Tibial artery (tissue), 4 donors: ENCODE measurements at regions of chr6 and their contacts with region 1.

Region 1: GRCh38 chr6:107674995-107675738 is 148.9 kb downstream of the SCML4 start:
- DNase-seq: peak; percentile 65 to 82
- H3K4me3 ChIP-seq: no peak overlapping the region
- H3K27ac ChIP-seq: no peak overlapping the region
- H3K4me1 ChIP-seq: peaks cover 0 to 5% (median 2%) of the 10 kb centered on the region in 4 donors
- H3K27me3 ChIP-seq: no peaks in the 10 kb centered on the region
- CTCF ChIP-seq: peak; percentile 79 to 83

Region 2: DNA sequence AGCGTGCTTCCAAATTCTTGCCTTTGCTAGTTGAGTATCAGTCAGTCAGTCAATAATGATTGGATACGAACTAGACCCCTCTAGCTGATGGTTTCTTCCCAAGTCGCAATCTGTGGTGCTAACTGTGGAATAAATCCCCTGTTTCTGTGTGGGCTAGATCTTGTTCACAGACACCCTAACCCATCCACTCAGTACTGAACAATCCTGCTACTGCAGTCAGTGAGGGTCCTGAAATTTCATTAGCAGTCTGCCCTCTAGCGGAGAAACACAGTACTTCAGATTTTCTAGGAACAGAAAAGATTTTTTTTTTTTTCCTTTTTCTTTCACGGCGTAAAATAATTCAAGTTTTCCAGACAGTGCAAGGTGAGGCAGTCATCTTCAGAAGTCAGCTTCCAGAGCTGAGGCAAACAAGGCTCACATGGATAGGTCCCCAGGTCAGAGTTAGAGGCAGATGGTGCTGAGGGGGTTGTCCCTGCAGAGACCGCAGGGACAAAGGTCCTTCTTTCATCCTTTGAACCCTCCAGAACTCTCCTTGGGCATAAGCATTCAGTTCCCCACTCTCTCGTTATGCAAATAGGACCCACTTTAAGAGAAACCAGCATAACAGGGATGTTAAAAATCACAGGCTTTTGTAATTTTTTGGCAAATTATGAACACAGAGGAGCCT is 29.3 kb after region 1 on chr6:
- intact Hi-C with region 1: loop called (anchors 1 kb)
- DNase-seq: no peak
- H3K4me3 ChIP-seq: no peak overlapping the region
- H3K27ac ChIP-seq: no peak overlapping the region
- H3K4me1 ChIP-seq: peaks cover 0 to 4% (median 0%) of the 10 kb centered on the region in 4 donors
- H3K27me3 ChIP-seq: no peaks in the 10 kb centered on the region
- CTCF ChIP-seq: peak; percentile 69 to 75

Region 3: GRCh38 chr6:107847844-107848802 is 173.0 kb after region 1 on chr6:
- intact Hi-C with region 1: loop called (anchors 5 kb)
- DNase-seq: peak; percentile 72 to 87
- H3K4me3 ChIP-seq: peak overlapping the region; percentile 44 to 52
- H3K27ac ChIP-seq: no peak overlapping the region
- H3K4me1 ChIP-seq: peaks cover 0 to 11% (median 9%) of the 10 kb centered on the region in 4 donors
- H3K27me3 ChIP-seq: peaks cover 0 to 13% of the 10 kb centered on the region in 2 donors
- CTCF ChIP-seq: peak; percentile 87 to 91